ENCODE measurements at regions of chr9 and their contacts with region 1.

Region 1: GRCh38 chr9:26551971-26552370 is 340.6 kb downstream of the CAAP1 start:
- DNase-seq: no peak
- ATAC-seq: no peak
- H3K4me3 ChIP-seq: no peak overlapping the region
- H3K27ac ChIP-seq: no peak overlapping the region
- H3K4me1 ChIP-seq: no peaks in the 10 kb centered on the region
- H3K27me3 ChIP-seq: no peaks in the 10 kb centered on the region

Region 2: GRCh38 chr9:26502311-26502710 is 49.7 kb before region 1 on chr9:
- intact Hi-C with region 1: loop called in 1 of 4 experiments (anchors 10 kb)
- DNase-seq: no peak
- ATAC-seq: no peak
- H3K4me3 ChIP-seq: no peak overlapping the region
- H3K27ac ChIP-seq: no peak overlapping the region
- H3K4me1 ChIP-seq: no peaks in the 10 kb centered on the region
- H3K27me3 ChIP-seq: no peaks in the 10 kb centered on the region